ENCODE measurements at regions of chr11 and their contacts with region 1.

Region 1: DNA sequence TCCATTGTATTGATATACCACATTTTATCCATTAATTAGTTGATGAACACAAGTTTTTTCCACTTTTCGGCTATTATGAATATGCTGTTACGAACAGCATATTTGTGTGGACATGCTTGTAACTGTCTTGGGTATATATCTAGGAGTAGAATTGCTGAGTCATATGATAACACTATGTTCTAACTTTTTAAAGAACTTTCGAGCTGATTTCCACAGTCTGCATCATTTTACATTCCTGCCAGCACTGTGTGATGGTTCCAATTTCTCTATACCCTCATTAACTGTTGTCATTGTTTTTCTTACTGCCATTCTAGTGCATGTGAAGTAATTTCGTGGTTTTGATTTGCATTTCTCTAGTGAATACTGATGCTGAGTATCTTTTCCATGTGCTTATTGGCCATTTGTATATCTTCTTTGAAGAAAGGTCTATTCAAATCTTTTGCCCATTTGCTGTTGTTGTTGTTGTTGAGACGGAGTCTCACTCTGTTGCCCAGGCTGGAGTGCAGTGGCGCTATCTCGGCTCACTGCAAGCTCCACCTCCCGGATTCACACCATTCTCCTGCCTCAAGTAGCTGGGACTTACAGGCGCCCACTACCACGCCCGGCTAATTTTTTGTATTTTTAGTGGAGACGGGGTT is 7.4 kb upstream of the RCE1 start:
- DNase-seq: no peak
- CTCF ChIP-seq: no peak

Region 2: DNA sequence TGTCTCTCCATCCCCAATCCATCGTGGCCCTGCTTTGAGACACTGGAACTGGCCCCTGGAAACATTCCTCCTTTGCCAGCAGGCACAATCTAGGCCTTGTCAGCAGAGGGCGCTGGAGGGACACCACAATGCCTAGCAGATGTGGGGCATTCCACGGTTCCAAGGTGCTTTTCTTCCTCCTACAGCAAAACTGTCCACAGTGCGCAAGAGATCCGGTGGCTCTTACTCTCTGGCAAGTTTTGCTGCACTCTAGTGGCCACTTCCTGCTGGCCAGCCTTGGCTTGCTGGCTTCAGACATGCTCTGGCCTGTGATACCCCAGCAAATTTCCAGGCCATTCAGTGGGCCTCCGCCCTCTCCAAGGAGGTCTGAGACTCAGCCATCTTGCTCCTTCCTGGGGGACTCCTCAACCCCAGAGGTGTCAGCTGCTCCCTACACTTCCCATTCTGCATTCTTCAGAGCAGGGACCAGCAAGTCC is 141.1 kb before region 1 on chr11:
- in situ Hi-C with region 1: loop called (anchors 5 kb)
- DNase-seq: peak; percentile 91
- CTCF ChIP-seq: peak; percentile 80

Region 3: DNA sequence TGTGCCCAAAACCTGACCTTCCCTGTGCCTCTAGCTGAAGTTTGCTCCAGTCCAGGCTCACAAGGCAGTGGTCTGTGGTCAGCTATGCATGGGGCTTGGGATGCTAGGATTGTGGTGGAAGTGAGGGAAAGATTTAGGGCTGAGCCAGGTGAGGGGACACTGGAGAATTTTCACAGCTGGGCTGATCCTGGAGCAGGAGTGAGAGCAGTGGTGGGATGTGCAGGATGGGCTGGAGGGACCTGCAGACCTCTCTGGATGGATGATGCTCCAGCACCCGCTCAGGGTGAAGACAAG is 259.3 kb after region 1 on chr11:
- in situ Hi-C with region 1: no loop called
- DNase-seq: no peak
- CTCF ChIP-seq: no peak